AG04449 (cell line): ENCODE measurements at regions of chr11 and their contacts with region 1.

Region 1: GRCh38 chr11:61361686-61362541 is at the starts of genes CYB561A3 and TMEM138:
- DNase-seq: peak; percentile 68
- H3K4me3 ChIP-seq: peak within 1 kb of the TSS; percentile 69
- CTCF ChIP-seq: no peak

Region 2: GRCh38 chr11:61332797-61333549 is 28.9 kb before region 1 on chr11 and contains the starts of genes DDB1 and TKFC:
- CTCF ChIA-PET with region 1: interaction called, 352 read pairs
- POLR2A ChIA-PET with region 1: interaction called, 9 read pairs
- DNase-seq: no peak
- H3K4me3 ChIP-seq: peak within 1 kb of the TSS; percentile 95
- CTCF ChIP-seq: no peak

Region 3: GRCh38 chr11:61347916-61348461 is 13.9 kb before region 1 on chr11:
- CTCF ChIA-PET with region 1: interaction called, 5 read pairs
- POLR2A ChIA-PET with region 1: interaction called, 33 read pairs
- DNase-seq: no peak
- H3K4me3 ChIP-seq: no peak overlapping the region
- CTCF ChIP-seq: no peak

Region 4: GRCh38 chr11:61378713-61379313 is 16.9 kb after region 1 on chr11:
- CTCF ChIA-PET with region 1: interaction called, 239 read pairs
- POLR2A ChIA-PET with region 1: interaction called, 20 read pairs
- DNase-seq: peak; percentile 92
- H3K4me3 ChIP-seq: no peak overlapping the region
- CTCF ChIP-seq: no peak

Region 5: GRCh38 chr11:61453695-61454094 is 91.8 kb after region 1 on chr11:
- CTCF ChIA-PET with region 1: no interaction called
- POLR2A ChIA-PET with region 1: no interaction called
- DNase-seq: no peak
- H3K4me3 ChIP-seq: no peak overlapping the region
- CTCF ChIP-seq: no peak